Upper lobe of right lung (tissue), 1 donor: ENCODE measurements at regions of chr3 and their contacts with region 1.

Region 1: GRCh38 chr3:24264748-24265158 is 229.9 kb downstream of the THRB start:
- DNase-seq: no peak
- ATAC-seq: peak; percentile 92
- H3K4me3 ChIP-seq: no peak overlapping the region
- H3K27ac ChIP-seq: no peak overlapping the region
- H3K4me1 ChIP-seq: no peaks in the 10 kb centered on the region
- H3K27me3 ChIP-seq: no peaks in the 10 kb centered on the region
- CTCF ChIP-seq: peak; percentile 71

Region 2: GRCh38 chr3:24037971-24038370 is 226.8 kb before region 1 on chr3:
- intact Hi-C with region 1: no loop called
- DNase-seq: no peak
- ATAC-seq: no peak
- H3K4me3 ChIP-seq: no peak overlapping the region
- H3K27ac ChIP-seq: no peak overlapping the region
- H3K4me1 ChIP-seq: peaks cover 10% of the 10 kb centered on the region
- H3K27me3 ChIP-seq: no peaks in the 10 kb centered on the region
- CTCF ChIP-seq: no peak

Region 3: DNA sequence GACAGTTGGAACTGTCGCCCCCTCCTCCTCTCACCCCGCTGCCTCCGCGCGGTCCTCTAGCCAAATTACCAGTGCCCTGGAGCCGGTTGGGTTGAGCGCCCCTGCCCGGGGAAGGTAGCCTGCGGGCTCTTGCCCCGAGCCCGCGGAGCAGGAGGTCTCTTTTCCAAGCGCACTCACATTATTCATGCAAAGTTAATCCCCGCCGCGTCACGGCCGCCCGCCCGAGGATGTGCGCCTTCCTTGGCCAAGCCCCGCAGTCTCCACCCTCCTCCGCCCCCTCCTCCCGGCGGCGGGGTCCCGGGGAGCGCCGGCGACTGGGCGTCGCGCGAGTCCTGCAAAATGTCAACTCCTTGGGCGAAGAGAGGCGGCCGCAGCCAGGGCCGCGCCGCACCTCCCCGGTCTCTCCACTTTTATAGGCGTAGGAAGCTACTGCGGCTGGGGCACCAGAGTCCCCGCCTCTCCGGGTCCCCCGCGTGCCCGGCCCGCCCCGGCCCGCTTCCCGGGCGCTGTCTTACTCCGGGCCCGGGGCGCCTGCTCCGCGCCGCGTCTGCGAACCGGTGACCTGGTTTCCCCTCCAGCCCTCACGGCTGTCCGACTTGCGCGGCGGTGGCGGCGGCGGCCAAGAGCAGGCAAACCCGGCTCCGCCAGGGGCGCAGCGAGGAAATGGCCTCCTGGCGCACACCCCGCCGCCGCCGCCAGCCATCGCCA is 230.0 kb after region 1 on chr3 and contains the start of gene THRB:
- intact Hi-C with region 1: loop called (anchors 10 kb)
- DNase-seq: peak; percentile 89
- ATAC-seq: peak; percentile 77
- H3K4me3 ChIP-seq: peak within 1 kb of the TSS; percentile 75
- H3K27ac ChIP-seq: peak within 1 kb of the TSS; percentile 86
- H3K4me1 ChIP-seq: peaks cover 14% of the 10 kb centered on the region
- H3K27me3 ChIP-seq: no peaks in the 10 kb centered on the region
- CTCF ChIP-seq: peak; percentile 33
- total RNA-seq, gene THRB: 19.7 TPM

Region 4: GRCh38 chr3:24640330-24640877 is 375.7 kb after region 1 on chr3:
- intact Hi-C with region 1: loop called (anchors 10 kb)
- DNase-seq: no peak
- ATAC-seq: peak; percentile 85
- H3K4me3 ChIP-seq: no peak overlapping the region
- H3K27ac ChIP-seq: no peak overlapping the region
- H3K4me1 ChIP-seq: no peaks in the 10 kb centered on the region
- H3K27me3 ChIP-seq: no peaks in the 10 kb centered on the region
- CTCF ChIP-seq: peak; percentile 58